CD4-positive, alpha-beta memory T cell (primary cell): ENCODE measurements at regions of chr1 and their contacts with region 1.

Region 1: GRCh38 chr1:23184212-23184934 is 15.7 kb upstream of the LUZP1 start:
- DNase-seq: peak; percentile 44 to 64 (median 54)
- H3K4me3 ChIP-seq: peak overlapping the region in 1 of 2 donors; percentile 35
- H3K4me3 Mint-ChIP-seq: peak overlapping the region; percentile 66 to 86 (median 78)
- H3K27ac ChIP-seq: no peak overlapping the region
- H3K27ac Mint-ChIP-seq: peak overlapping the region in 6 of 7 donors; percentile 19 to 81 (median 62)
- H3K4me1 ChIP-seq: peaks cover 11% of the 10 kb centered on the region
- H3K4me1 Mint-ChIP-seq: peaks cover 8 to 18% (median 11%) of the 10 kb centered on the region in 4 donors
- H3K27me3 ChIP-seq: no peaks in the 10 kb centered on the region
- H3K27me3 Mint-ChIP-seq: peaks cover 0 to 1% of the 10 kb centered on the region in 2 donors

Region 2: DNA sequence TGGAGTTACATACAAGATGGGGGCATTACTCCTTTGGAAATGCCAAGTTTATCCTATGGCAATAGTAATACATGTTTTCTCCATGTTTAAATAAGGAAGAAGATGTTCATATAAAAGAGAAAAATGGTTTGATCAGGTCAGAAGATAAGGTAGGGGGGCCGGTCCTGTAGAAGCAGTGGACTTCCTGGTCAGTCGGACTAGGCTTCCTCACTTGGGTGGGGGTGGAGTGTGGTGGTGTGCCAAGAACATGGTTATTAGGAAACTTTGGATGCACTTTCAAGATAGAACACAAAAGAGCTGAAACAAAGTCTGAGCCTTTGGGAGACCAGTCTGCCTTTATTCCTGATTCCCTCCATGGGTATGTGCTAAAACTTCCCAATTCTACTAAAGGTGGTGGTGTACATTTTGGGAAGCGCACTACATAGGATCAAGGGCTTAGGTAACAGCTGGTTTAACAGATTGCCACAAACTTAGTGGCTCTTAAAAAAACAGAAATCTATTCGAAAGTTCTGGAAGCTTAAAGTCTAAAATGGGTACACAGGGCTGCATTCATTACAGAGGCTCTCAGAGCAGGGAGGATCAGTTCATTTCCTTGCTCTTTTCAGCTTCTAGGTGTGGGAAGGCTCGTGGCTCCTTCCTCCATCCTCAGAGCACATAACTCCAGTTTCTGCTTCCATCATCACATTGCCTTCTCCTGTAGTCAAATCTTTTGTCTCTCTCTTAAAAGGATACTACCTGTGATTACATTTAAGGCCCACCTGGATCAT is 100.5 kb before region 1 on chr1:
- CTCF ChIA-PET with region 1: interaction called, 33 read pairs
- POLR2A ChIA-PET with region 1: no interaction called
- intact Hi-C with region 1: no loop called
- DNase-seq: no peak
- H3K4me3 ChIP-seq: no peak overlapping the region
- H3K4me3 Mint-ChIP-seq: no peak overlapping the region
- H3K27ac ChIP-seq: no peak overlapping the region
- H3K27ac Mint-ChIP-seq: peak overlapping the region in 3 of 7 donors; percentile 10 to 19 (median 17)
- H3K4me1 ChIP-seq: no peaks in the 10 kb centered on the region
- H3K4me1 Mint-ChIP-seq: no peaks in the 10 kb centered on the region
- H3K27me3 ChIP-seq: no peaks in the 10 kb centered on the region
- H3K27me3 Mint-ChIP-seq: no peaks in the 10 kb centered on the region

Region 3: DNA sequence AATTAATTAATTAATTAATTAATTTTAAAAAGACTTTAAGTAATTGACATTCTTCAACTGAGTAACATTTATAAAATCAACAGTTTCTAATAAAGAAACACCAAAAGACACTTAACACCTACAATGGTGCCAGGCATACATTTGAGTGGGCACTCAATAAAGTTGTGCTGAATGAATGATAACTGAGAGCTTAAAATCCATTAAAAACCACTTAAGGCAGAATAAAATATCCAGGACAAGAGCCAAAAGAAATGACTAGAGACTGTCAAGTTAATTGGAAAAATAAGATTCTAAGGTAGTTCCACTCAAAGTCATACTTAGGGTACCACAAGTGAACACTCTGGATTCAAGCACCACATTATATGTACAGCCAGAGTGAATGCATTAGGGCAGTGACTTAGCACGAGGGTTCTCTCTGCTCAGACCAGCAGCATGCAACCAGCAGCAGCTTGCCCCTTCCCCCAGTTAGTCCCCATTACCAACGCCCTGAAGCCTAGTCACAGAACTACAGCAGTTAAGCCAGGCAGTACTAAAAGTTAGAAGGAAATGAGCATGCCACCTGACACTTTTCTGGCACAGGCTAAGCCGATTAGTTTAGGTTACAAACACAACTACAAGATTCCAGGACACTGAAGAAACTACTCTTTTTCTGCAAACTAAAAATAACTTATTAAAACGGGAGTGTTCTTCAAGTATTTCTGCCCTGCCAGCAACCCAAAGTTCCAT is 62.2 kb before region 1 on chr1:
- CTCF ChIA-PET with region 1: interaction called, 41 read pairs
- POLR2A ChIA-PET with region 1: interaction called, 15 read pairs
- intact Hi-C with region 1: no loop called
- DNase-seq: no peak
- H3K4me3 ChIP-seq: no peak overlapping the region
- H3K4me3 Mint-ChIP-seq: no peak overlapping the region
- H3K27ac ChIP-seq: no peak overlapping the region
- H3K27ac Mint-ChIP-seq: peak overlapping the region in 4 of 7 donors; percentile 2 to 67 (median 33)
- H3K4me1 ChIP-seq: peaks cover 59% of the 10 kb centered on the region
- H3K4me1 Mint-ChIP-seq: peaks cover 43 to 87% (median 63%) of the 10 kb centered on the region in 4 donors
- H3K27me3 ChIP-seq: no peaks in the 10 kb centered on the region
- H3K27me3 Mint-ChIP-seq: no peaks in the 10 kb centered on the region

Region 4: DNA sequence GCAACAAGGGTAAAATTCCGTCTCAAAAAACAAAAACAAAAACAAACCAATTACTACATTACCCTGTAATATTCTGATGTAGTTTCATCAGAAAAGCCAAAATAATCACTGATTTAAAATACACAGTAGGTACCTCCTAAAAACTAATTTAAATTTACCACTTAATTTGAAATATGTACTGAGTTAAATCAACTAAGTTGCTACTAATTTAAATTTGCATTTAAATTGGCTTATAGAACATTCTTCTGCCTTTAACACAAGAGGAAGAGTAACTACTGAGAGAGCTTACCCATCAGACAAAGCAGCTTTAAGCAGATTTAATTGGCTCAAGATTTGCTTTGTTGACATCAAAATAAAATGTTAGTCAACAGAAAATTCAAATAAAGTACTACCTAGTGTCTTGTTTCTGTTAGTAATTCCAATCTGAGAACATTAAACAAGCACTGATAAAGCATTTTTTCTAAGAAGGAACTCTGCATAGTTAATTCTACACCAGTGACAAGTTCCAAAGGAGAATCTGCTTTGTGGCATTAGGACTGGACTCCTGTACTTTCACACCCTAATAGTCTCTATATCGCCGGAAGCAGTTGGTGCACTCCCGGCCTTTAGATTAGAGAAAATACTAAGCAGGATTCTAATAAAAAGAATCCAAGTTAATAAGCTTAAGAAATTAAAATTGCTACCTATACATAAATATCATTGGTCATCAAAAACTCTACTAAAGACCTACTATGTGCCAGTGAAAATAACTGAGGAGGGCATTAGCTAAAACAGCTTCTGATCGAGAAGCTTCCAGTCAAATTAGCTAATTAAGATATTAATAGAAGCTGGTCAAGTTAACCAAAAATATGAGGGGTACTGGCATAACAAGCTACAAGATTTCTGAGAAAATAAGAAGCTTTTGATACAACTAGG is 24.2 kb before region 1 on chr1:
- CTCF ChIA-PET with region 1: interaction called, 126 read pairs
- POLR2A ChIA-PET with region 1: interaction called, 3 read pairs
- intact Hi-C with region 1: no loop called
- DNase-seq: no peak
- H3K4me3 ChIP-seq: no peak overlapping the region
- H3K4me3 Mint-ChIP-seq: no peak overlapping the region
- H3K27ac ChIP-seq: no peak overlapping the region
- H3K27ac Mint-ChIP-seq: no peak overlapping the region
- H3K4me1 ChIP-seq: no peaks in the 10 kb centered on the region
- H3K4me1 Mint-ChIP-seq: peaks cover 10 to 43% (median 16%) of the 10 kb centered on the region in 4 donors
- H3K27me3 ChIP-seq: no peaks in the 10 kb centered on the region
- H3K27me3 Mint-ChIP-seq: no peaks in the 10 kb centered on the region

Region 5: GRCh38 chr1:23196639-23197328 is 12.4 kb after region 1 on chr1:
- CTCF ChIA-PET with region 1: interaction called, 26 read pairs
- POLR2A ChIA-PET with region 1: no interaction called
- intact Hi-C with region 1: no loop called
- DNase-seq: no peak
- H3K4me3 ChIP-seq: no peak overlapping the region
- H3K4me3 Mint-ChIP-seq: no peak overlapping the region
- H3K27ac ChIP-seq: no peak overlapping the region
- H3K27ac Mint-ChIP-seq: no peak overlapping the region
- H3K4me1 ChIP-seq: no peaks in the 10 kb centered on the region
- H3K4me1 Mint-ChIP-seq: no peaks in the 10 kb centered on the region
- H3K27me3 ChIP-seq: no peaks in the 10 kb centered on the region
- H3K27me3 Mint-ChIP-seq: peaks cover 9 to 16% of the 10 kb centered on the region in 2 donors

Region 6: DNA sequence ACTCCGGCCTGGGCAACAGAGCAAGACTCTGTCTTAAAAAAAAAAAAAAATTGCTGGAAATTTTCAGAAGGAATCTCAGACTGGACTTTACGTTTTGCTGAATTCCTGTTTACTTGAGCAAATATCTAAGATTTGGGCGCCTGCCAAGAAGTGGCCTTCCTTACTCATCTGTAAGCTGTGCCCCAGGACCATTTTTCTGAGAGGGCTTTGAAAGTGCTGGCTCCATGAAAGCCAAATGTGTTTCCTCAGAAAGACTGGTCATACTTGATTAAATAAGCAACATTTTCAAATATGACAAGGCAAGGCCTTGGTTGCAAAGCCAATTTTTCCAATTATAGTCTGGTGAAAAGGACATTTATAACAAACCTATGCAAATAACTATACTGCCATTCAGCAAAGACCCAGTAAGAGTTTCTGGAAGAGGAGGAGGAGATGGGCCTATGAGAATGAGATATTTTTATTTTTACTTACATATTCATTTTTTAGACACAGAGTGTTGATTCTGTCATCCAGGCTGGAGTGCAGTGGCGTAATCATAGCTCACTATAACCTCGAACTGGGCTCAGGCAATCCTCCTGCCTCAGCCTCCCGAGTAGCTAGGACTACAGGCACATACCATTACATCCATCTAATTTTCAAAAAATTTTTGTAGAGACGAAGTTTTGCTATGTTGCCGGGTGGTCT is 89.2 kb after region 1 on chr1:
- CTCF ChIA-PET with region 1: no interaction called
- POLR2A ChIA-PET with region 1: no interaction called
- intact Hi-C with region 1: no loop called
- DNase-seq: no peak
- H3K4me3 ChIP-seq: no peak overlapping the region
- H3K4me3 Mint-ChIP-seq: no peak overlapping the region
- H3K27ac ChIP-seq: no peak overlapping the region
- H3K27ac Mint-ChIP-seq: no peak overlapping the region
- H3K4me1 ChIP-seq: no peaks in the 10 kb centered on the region
- H3K4me1 Mint-ChIP-seq: no peaks in the 10 kb centered on the region
- H3K27me3 ChIP-seq: no peaks in the 10 kb centered on the region
- H3K27me3 Mint-ChIP-seq: peaks cover 28 to 37% of the 10 kb centered on the region in 2 donors